ENCODE measurements at regions of chr3 and their contacts with region 1.

Region 1: DNA sequence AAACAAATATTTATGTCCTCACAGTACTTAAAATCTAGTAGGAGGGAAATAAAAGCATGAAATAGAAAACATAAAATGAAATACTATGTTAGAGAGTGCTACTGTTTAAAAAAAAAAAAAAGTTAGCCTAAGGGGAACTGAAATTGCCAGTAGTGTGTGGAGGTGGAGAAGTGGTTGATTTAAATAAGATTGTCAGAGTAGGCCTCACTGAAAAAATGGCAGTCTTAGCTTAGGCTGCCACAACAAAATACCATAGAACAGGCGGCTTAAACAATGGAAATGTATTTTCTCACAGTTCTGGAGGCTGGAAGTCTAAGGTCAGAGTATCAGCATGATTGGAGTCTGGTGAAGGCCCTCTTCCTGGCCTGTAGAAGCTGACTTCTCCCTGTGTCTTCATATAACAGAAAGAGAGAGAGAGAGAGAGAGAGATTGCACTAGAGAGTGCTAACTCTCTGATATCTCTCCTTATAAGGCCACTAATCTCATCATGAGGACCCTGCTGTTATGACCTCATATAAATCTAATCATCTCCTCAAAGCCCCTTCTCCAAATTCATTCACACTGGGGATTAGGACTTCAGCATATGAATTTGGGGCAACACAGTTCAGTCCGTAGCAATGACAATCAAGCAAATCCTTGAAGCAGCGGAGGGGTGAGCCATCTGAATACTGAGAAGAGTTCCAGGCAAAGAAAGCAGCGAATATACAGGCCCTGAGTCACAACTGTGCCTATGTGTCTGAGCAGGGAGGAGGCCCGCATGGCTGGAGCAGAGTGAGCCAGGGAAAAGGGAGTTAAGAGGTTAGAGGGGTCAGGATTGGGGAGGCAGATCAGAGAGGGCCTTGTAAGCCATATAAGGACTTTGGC is 23.6 kb upstream of the LRRC34 start:
- DNase-seq: no peak
- ATAC-seq: no peak

Region 2: GRCh38 chr3:168974617-168975403 is 861.5 kb before region 1 on chr3:
- intact Hi-C with region 1: loop called (anchors 5 kb)
- DNase-seq: no peak
- ATAC-seq: no peak

Region 3: GRCh38 chr3:169780742-169781141 is 55.6 kb before region 1 on chr3:
- intact Hi-C with region 1: no loop called
- DNase-seq: no peak
- ATAC-seq: no peak

Region 4: GRCh38 chr3:169980055-169980454 is 143.7 kb after region 1 on chr3:
- intact Hi-C with region 1: no loop called
- DNase-seq: no peak
- ATAC-seq: no peak

Measured in sciatic nerve (tissue), 2 donors.